ENCODE measurements at regions of chr7 and their contacts with region 1.

Region 1: DNA sequence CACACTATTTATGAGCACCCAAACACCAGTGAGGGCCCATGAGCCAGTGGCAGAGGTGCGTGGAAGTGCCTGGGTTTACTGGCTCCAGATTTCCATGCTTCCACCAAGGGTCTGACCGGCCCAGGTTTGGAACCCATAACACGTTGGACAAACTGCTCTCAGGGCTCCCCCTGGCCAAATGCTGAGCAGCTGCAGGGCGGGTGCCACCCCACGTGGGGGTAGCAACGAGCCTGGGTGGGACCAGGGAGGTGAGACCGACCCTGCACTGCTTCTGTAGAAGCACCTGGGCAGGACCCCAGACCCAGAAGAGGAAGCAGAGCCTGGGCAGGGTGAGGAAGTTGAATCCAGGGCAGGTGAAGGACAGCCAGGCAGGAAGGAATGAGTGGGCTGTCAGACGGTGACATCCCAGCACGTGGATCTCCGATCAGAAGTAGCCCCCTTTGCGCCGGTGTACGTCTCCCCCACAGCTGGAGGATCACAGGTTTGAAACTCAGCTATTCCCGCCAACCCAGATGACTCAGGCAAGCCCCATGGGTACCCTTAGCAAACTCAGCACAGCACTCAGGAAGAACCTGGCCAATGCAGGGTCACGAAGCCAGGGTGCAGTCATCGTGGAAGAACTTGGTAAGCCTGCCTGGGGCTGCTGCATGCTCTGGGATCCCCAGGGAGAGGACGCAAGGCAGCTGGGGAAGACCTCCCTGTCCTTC is 100.4 kb upstream of the DDC start:
- DNase-seq: no peak
- ATAC-seq: peak in 1 of 8 donors; percentile 11
- H3K4me3 ChIP-seq: no peak overlapping the region
- H3K27ac ChIP-seq: peak overlapping the region in 7 of 10 donors; percentile 13 to 81 (median 29)
- H3K4me1 ChIP-seq: peaks cover 32 to 97% (median 89%) of the 10 kb centered on the region in 9 donors
- H3K27me3 ChIP-seq: no peaks in the 10 kb centered on the region
- CTCF ChIP-seq: no peak

Region 2: GRCh38 chr7:50620433-50620832 is 45.1 kb before region 1 on chr7:
- intact Hi-C with region 1: loop called in 3 of 10 experiments (anchors 5 kb)
- DNase-seq: no peak
- ATAC-seq: no peak
- H3K4me3 ChIP-seq: no peak overlapping the region
- H3K27ac ChIP-seq: peak overlapping the region in 3 of 10 donors; percentile 1 to 78 (median 16)
- H3K4me1 ChIP-seq: peaks cover 0 to 45% (median 24%) of the 10 kb centered on the region in 9 donors
- H3K27me3 ChIP-seq: no peaks in the 10 kb centered on the region
- CTCF ChIP-seq: no peak

Region 3: DNA sequence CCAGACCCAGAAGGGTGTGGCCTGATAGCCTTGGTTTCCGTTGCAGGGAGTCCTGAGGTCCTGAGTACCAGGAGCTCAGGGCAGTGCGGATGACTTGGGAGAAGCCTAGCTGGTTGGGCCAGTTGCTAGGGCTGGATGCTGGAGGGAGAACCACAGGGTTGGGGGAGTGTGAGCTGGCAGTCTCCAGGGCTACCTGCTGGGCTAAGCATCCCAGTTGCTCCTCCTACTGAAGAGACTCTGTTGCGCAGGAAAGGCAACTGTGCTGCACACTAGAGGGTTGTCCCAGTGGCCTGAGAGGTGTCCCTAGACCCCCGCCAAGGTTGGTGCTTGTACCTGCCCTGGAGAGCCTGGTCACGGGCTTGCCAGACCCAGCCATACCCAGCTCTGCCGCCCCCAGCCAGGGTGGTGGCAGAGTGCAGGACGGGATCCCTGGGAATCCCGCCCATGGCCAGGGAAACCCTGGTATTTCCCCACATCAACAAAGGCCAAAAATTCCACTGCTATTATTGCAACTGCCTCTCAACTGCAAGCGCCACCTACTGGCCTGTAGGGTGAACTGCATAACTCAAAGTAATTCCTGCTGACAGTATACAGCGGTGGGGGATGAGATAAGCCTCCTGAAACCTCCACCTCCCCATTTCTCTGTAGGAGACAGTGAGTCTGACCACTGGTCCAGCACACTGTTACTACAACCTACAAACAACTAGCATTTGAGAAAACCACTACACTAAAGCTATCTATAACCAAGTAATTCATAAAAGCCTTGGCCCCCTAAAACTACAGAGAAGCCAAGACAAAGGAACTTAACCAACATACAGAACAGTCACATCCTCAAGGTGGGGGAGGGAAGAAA is 32.8 kb before region 1 on chr7:
- intact Hi-C with region 1: loop called in 3 of 10 experiments (anchors 5 kb)
- DNase-seq: no peak
- ATAC-seq: peak in 3 of 8 donors; percentile 11 to 46 (median 34)
- H3K4me3 ChIP-seq: no peak overlapping the region
- H3K27ac ChIP-seq: peak overlapping the region in 2 of 10 donors; percentile 69 to 76
- H3K4me1 ChIP-seq: peaks cover 9 to 54% (median 39%) of the 10 kb centered on the region in 9 donors
- H3K27me3 ChIP-seq: no peaks in the 10 kb centered on the region
- CTCF ChIP-seq: peak; percentile 53 to 83 (median 63)